A549 (cell line): ENCODE measurements at regions of chr17 and their contacts with region 1.

Region 1: GRCh38 chr17:57955183-57955931 is at the start of gene CUEDC1:
- DNase-seq: peak; percentile 69 to 76
- ATAC-seq: peak; percentile 69 to 79
- H3K4me3 ChIP-seq: peak within 1 kb of the TSS; percentile 92
- H3K27ac ChIP-seq: peak within 1 kb of the TSS; percentile 93 to 100
- H3K4me1 ChIP-seq: peaks cover 67% of the 10 kb centered on the region
- CTCF ChIP-seq: peak; percentile 33; the same call in 2 of the 3 replicates
- EP300 ChIP-seq: no peak
- POLR2A ChIP-seq: peak; percentile 70
- RAD21 ChIP-seq: peak; percentile 9 to 40; a peak in 2 of 5 replicates
- polyA plus RNA-seq, gene CUEDC1: 44.3 and 54.8 TPM in 2 replicates

Region 2: DNA sequence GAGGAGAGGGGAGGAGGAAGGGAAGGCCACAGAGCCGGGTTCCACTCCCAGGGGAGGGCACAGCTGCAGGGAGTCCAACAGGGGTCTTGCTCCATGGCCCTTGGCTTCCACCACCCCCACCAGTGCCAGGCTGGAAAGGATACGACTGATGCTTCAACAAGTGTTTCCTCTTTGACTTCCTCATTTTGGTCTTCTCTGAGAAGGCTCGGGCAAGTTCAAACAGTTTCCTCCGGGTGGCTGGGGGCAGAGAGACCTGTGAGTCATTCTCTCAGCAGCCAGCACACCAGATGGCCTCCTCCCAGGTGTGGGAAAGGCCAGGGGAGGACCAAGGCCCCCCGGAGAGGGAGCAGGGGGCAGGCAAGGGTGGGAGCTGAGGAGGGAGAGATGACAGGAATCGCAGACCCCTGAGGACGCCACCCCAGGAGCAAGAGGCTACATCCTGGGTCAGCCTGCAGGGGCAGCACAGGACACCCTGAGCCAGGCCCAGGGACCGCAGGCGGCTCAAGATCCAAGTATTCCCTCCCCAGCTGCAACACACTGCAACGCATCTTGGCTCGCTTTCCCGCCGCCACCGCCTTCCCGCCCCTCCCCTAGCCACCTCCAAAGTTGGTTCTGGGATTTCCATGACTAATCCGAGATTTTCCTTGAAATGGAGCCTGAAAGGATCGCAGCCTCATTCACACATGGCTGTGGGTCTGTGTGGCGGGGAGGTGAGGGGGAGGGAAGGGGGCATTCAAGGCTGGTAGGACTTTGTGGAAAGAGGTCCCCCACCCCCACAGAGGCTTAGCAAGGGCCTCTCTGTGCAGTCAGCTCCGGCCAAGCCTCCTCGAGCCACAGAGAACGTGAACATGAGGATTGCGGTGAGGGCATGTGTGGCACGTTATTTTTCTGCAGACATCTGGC is 87.1 kb before region 1 on chr17:
- CTCF ChIA-PET with region 1: interaction called, 227 read pairs
- POLR2A ChIA-PET with region 1: interaction called, 8 read pairs
- DNase-seq: peak; percentile 92 to 97
- ATAC-seq: peak; percentile 84 to 91
- H3K4me3 ChIP-seq: no peak overlapping the region
- H3K27ac ChIP-seq: peak overlapping the region; percentile 92 to 95
- H3K4me1 ChIP-seq: peaks cover 69% of the 10 kb centered on the region
- CTCF ChIP-seq: peak; percentile 50
- EP300 ChIP-seq: peak; percentile 44 to 91; a peak in 4 of 5 replicates
- POLR2A ChIP-seq: no peak
- RAD21 ChIP-seq: peak in 1 of 2 experiments; percentile 75

Region 3: GRCh38 chr17:57875309-57876115 is 79.8 kb before region 1 on chr17:
- CTCF ChIA-PET with region 1: interaction called, 155 read pairs
- POLR2A ChIA-PET with region 1: interaction called, 19 read pairs
- DNase-seq: peak; percentile 96 to 98
- ATAC-seq: peak; percentile 83 to 88
- H3K4me3 ChIP-seq: peak overlapping the region; percentile 7; the same call in 1 of the 3 replicates
- H3K27ac ChIP-seq: peak overlapping the region; percentile 92 to 95
- H3K4me1 ChIP-seq: peaks cover 95% of the 10 kb centered on the region
- CTCF ChIP-seq: peak; percentile 54; the same call in 2 of the 3 replicates
- EP300 ChIP-seq: peak; percentile 73 to 92; a peak in 3 of 5 replicates
- POLR2A ChIP-seq: no peak
- RAD21 ChIP-seq: peak; percentile 72 to 86

Region 4: GRCh38 chr17:57902800-57903759 is 52.3 kb before region 1 on chr17:
- CTCF ChIA-PET with region 1: interaction called, 28 read pairs
- POLR2A ChIA-PET with region 1: interaction called, 16 read pairs
- DNase-seq: peak; percentile 95 to 99
- ATAC-seq: peak; percentile 85 to 87
- H3K4me3 ChIP-seq: no peak overlapping the region
- H3K27ac ChIP-seq: peak overlapping the region; percentile 94 to 97
- H3K4me1 ChIP-seq: peaks cover 82% of the 10 kb centered on the region
- CTCF ChIP-seq: no peak
- EP300 ChIP-seq: peak; percentile 36 to 72; a peak in 2 of 5 replicates
- POLR2A ChIP-seq: no peak
- RAD21 ChIP-seq: peak; percentile 41 to 53

Region 5: DNA sequence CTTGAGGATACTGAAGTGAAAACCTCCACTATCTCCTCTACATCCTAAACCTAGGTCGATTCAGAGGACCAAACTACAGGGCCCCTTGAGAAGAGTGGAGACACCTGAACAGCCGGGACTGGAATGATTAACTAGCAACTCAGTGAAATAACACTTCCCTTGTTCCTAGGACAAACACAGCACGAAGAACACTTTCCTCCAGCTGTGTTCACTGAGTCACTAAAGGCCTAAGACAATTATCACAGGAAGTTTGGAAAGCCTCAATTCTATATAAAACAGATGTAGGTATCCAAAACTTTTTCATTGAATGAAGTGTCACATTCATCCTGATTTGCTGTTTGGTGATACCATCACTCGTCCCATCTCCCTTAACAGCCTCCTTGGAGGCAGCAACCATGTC is 15.3 kb after region 1 on chr17:
- CTCF ChIA-PET with region 1: interaction called, 386 read pairs
- POLR2A ChIA-PET with region 1: interaction called, 6 read pairs
- DNase-seq: no peak
- ATAC-seq: peak in 1 of 2 experiments; percentile 9; a peak in 1 of 6 replicates
- H3K4me3 ChIP-seq: no peak overlapping the region
- H3K27ac ChIP-seq: peak overlapping the region in 1 of 2 experiments; percentile 50; a peak in 4 of 6 replicates
- H3K4me1 ChIP-seq: peaks cover 36% of the 10 kb centered on the region
- CTCF ChIP-seq: no peak
- EP300 ChIP-seq: no peak
- POLR2A ChIP-seq: no peak
- RAD21 ChIP-seq: no peak

Region 6: DNA sequence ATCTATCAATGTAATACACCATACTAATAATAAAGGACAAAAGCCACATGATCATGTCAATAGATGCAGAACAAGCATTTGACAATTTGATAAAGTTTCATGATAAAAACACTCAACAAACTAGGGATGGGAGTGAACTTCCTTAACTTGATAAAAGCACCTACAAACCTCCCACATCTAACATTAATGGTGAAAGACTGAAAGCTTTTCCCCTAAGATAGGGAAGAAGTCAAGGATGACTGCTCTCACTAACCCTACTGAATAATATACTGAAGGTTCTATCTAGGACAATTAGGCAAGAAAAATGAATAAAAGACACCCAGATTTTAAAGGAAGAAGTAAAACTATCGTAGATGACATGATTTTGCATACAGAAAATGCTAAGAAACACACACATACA is 117.5 kb after region 1 on chr17:
- CTCF ChIA-PET with region 1: no interaction called
- POLR2A ChIA-PET with region 1: no interaction called
- DNase-seq: no peak
- ATAC-seq: no peak
- H3K4me3 ChIP-seq: no peak overlapping the region
- H3K27ac ChIP-seq: no peak overlapping the region
- H3K4me1 ChIP-seq: no peaks in the 10 kb centered on the region
- CTCF ChIP-seq: no peak
- EP300 ChIP-seq: no peak
- POLR2A ChIP-seq: no peak
- RAD21 ChIP-seq: no peak

Region 7: GRCh38 chr17:58105093-58105492 is 149.7 kb after region 1 on chr17:
- CTCF ChIA-PET with region 1: no interaction called
- POLR2A ChIA-PET with region 1: no interaction called
- DNase-seq: no peak
- ATAC-seq: no peak
- H3K4me3 ChIP-seq: no peak overlapping the region
- H3K27ac ChIP-seq: no peak overlapping the region
- H3K4me1 ChIP-seq: no peaks in the 10 kb centered on the region
- CTCF ChIP-seq: no peak
- EP300 ChIP-seq: no peak
- POLR2A ChIP-seq: no peak
- RAD21 ChIP-seq: no peak